Posterior vena cava (tissue), 2 donors: ENCODE measurements at regions of chr12 and their contacts with region 1.

Region 1: DNA sequence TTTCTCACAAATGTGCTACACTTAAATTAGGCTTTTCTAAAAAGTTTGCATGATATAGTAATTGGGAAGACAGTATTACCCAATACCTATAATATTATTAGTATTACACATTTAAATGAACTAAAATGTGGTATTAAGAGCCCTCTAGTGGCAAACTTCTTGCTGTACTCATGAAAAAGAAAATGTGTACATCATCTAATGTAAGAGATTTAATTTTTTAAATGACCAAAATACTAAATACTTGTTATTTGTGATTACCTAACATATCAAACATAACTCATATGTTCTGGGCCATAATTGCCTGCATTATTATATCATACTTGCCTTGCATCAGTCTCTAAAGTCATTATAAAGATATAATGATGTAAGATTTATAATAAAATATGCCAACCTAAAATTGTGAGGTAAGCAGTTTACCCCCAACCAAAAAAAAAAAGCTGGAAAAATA is 64.2 kb downstream of the DNAI7 start:
- DNase-seq: no peak

Region 2: DNA sequence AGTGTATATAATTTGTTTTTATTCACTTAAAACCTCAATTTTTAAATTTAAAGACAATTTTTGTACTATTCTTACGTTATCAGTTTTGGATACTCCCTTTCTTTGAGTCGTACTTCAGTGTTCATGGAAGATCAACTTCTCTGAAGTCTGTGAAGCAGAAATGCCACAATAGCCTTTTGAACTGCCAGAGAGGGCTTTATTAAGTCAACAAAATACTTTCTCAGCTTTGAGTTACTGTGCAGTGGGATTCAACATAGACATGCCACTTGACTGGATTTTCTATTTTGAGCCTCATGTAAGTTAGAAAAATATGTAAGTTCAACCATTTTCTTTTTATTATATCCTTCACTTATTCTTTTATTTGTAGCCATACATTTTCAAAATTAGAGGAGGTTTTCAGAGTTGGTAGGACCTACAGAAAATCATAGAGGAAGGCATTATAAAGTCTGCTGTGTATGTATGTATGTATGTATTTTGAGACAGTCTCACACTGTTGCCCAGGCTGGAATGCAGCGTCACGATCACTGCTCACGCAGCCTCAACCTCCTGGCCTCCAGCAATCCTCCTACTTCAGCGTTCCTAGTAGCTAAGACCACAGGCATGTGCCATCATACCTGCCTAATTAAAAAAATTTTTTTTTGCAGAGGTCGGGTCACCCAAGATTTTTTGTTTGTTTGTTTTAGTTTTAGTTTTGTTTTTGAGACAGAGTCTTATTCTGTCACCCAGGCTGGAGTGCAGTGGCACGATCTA is 150.6 kb before region 1 on chr12:
- intact Hi-C with region 1: loop called in 1 of 2 experiments (anchors 10 kb)
- DNase-seq: no peak

Region 3: DNA sequence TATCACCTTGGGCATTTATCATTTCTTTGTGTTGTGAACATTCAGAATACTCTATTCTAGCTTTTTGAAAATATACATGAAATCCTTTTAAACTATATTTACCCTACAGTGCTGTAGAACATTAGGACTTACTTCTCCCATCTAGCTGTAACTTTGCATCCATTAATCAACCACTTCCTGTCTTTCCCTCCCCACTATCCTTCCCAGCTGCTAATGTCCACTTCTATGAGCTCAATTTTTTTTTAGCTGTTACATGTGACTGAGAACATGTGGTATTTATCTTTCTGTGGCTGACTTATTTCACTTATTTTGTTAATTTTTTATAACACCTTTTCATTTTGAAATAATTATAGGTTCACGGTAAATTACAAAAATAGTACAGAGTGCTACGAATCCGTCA is 286.3 kb after region 1 on chr12:
- intact Hi-C with region 1: no loop called
- DNase-seq: no peak